Right cardiac atrium (tissue), 5 donors: ENCODE measurements at regions of chr10 and their contacts with region 1.

Region 1: GRCh38 chr10:95246579-95247051 is 44.2 kb downstream of the PDLIM1 start:
- DNase-seq: peak; percentile 73 to 89 (median 79)
- ATAC-seq: peak; percentile 42 to 59
- H3K4me3 ChIP-seq: no peak overlapping the region
- H3K27ac ChIP-seq: peak overlapping the region; percentile 46
- H3K4me1 ChIP-seq: peaks cover 20% of the 10 kb centered on the region
- H3K27me3 ChIP-seq: no peaks in the 10 kb centered on the region

Region 2: GRCh38 chr10:95290461-95291364 is 44.1 kb after region 1 on chr10 and contains the start of gene PDLIM1:
- intact Hi-C with region 1: loop called in 2 of 4 experiments (anchors 5 kb)
- DNase-seq: peak; percentile 84 to 94 (median 92)
- ATAC-seq: peak; percentile 88 to 93
- H3K4me3 ChIP-seq: peak within 1 kb of the TSS; percentile 72
- H3K27ac ChIP-seq: peak within 1 kb of the TSS; percentile 81
- H3K4me1 ChIP-seq: peaks cover 7% of the 10 kb centered on the region
- H3K27me3 ChIP-seq: no peaks in the 10 kb centered on the region
- total RNA-seq, gene PDLIM1: 159 to 227 (median 169) TPM

Region 3: DNA sequence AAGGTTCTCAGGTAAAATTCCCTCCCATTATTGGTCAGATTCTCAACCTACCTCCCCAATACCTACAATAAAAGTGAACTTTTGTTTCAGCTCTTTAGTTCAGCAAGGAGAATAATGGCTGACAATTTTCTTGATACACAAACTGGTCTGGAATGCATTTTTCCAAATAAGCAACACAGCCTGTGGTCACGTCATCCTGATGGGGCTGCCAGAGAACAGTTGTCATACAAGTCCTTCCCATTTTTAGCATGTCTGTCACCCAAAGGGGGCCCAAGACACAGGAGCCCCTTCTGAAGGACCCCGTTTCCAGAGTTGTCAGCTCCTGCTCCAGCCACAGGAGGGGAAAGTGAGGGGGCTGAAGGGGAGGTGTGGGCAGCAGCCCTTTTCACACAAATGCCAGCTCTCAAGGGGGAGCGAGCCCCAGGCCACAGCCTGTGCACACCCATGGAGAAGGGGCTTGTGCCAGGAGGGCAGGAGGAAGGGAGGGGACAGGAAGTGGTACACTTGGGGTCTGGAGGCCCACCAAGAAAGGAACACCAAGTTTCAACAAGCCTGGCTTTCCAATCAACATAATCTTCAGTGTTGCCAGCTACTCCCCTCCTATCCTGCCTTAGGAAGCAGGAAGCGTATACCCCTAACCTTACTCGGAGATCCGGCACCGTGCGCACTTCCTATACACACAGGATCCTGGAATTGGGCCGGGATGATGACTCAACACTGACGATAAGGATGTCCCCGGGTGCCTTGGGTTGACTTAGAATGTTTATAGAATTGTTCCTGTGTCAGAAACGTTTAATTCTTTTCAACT is 87.6 kb after region 1 on chr10:
- intact Hi-C with region 1: loop called in 1 of 4 experiments (anchors 10 kb)
- DNase-seq: peak; percentile 90 to 95 (median 92)
- ATAC-seq: peak; percentile 92 to 96
- H3K4me3 ChIP-seq: no peak overlapping the region
- H3K27ac ChIP-seq: peak overlapping the region; percentile 93
- H3K4me1 ChIP-seq: peaks cover 26% of the 10 kb centered on the region
- H3K27me3 ChIP-seq: no peaks in the 10 kb centered on the region

Region 4: DNA sequence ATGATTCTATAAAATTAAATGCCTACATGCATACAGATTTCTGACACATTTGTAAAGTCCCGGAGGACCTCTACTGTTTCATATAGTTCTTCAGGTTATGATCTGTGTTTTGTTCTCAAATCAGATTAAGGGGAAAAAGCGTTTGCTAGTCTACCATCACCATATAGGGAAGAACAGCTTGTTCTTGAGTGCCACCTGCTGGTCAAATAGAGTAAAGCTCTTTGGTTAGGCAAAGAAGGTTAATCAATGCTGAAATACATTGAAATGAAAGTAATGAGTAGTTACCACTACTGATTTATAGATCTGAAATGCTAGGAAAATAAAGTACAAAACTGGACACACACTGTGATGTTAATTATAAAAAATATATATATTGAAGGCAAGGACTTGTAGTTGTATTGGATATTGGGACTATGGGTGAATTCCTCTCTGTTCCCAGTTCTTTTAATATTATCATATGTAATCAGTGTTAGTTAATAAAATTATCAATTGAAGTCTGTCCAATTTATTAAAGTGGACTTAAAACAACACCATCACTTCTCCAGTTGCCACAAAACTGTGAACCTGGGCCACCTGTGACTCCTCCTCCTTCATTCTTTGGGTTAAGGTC is 116.8 kb after region 1 on chr10:
- intact Hi-C with region 1: loop called (anchors 2 to 5 kb)
- DNase-seq: no peak
- ATAC-seq: peak in 1 of 2 donors; percentile 34
- H3K4me3 ChIP-seq: no peak overlapping the region
- H3K27ac ChIP-seq: no peak overlapping the region
- H3K4me1 ChIP-seq: peaks cover 7% of the 10 kb centered on the region
- H3K27me3 ChIP-seq: no peaks in the 10 kb centered on the region

Region 5: DNA sequence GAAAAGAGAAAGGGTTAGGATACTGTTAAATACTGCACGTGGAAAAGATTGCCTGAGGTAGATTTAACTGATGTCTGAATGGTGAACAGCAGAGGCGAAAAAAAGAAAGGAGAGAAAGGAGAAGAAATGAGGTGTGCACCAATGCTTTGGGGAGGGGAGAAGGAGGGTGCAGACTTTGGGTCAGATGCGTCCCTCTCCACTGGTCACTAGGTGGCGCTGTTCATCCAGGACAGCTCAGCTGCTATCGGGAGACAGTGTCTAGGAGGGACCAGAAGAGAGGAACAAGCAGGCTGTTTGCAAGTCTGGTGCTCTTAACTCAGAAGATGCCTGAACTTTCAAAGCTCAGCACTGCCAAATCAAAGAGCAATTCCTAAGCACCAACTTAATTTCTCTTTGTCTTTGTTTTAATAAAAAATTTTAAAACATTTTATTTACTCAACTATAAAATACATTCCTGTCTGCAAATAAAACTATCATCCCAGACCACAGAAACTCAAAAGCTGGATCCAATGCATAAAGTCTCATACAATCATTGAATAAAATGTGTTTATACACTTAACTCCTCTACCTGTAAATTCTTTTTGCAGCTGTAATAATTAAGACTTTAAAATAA is 128.1 kb after region 1 on chr10:
- intact Hi-C with region 1: loop called in 1 of 4 experiments (anchors 5 kb)
- DNase-seq: peak; percentile 80 to 89 (median 86)
- ATAC-seq: peak; percentile 88 to 91
- H3K4me3 ChIP-seq: no peak overlapping the region
- H3K27ac ChIP-seq: no peak overlapping the region
- H3K4me1 ChIP-seq: peaks cover 6% of the 10 kb centered on the region
- H3K27me3 ChIP-seq: no peaks in the 10 kb centered on the region